Common myeloid progenitor, CD34-positive (primary cell): ENCODE measurements at regions of chr1 and their contacts with region 1.

Region 1: DNA sequence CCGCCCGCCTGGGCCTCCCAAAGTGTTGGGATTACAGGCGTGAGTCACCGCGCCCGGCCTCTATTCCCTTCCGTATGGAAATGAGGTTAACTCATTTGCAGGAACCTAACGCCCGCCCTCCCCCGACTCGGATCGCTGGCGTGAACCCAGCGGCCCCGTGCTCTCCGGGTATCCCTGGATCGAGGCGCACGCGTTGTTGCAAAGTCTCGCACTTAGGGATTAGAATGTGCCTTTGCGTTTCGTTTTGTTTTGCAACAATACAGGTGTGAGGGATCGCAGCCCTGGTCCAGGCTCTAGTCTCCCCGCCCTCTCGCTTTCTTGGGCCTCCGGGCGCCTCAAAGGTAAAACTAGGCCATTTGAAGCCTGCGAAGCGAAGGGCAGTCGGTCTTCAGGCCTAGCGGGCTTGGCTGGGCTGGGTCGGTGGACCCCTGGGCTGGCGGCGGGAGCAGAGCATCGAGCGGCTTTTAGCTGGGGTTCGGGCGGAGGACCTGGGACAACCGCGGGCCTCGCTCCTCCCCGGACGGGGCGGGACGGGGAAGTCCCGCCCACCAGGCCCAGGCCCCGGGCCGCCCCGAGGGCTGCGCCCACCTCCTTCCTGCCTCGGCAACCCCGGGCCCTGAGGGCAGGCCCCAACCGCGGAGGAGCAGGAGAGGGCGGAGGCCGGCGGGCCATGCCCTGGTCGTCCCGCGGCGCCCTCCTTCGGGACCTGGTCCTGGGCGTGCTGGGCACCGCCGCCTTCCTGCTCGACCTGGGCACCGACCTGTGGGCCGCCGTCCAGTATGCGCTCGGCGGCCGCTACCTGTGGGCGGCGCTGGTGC is at the start of gene XKR8:
- DNase-seq: peak; percentile 82 to 91 (median 91)
- H3K4me3 ChIP-seq: peak within 1 kb of the TSS; percentile 49 to 93 (median 82)
- H3K27ac ChIP-seq: peak within 1 kb of the TSS; percentile 46 to 83
- H3K4me1 ChIP-seq: peaks cover 2 to 33% (median 23%) of the 10 kb centered on the region in 4 experiments
- H3K27me3 ChIP-seq: no peaks in the 10 kb centered on the region

Region 2: DNA sequence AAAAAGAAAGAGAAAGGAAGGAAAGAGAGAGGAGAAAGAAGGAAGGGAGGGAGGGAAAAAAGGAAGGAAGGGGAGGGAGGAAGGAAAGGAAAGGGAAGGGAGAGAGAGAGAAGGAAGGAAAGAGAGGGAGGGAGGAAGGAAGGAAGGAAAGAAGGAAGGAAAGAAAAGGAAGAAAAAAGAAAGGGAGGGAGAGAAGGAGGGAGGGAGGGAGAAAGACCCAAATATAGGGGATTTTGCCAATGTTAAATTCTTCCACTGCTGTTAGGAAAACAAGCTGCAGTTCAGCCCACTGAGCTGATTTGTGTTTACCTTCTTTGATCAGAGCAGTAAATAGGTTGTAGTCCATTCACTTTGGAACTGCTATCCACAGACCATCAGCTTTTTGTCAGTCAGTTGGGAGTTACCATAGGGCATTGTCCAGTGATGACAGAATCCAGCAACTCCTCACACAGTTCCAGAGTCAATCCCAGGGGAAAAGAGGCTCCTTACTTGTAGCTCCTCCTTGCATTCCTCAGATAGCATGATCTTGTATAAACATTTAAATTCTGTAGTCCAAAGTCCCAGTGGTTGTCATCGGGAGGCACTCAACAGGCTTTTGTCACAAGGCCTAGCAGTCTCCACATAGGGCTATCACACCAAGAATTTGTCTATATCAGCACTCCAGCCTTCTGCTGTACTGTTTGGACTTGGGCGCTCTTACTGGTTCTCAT is 142.5 kb before region 1 on chr1:
- CTCF ChIA-PET with region 1: no interaction called
- POLR2A ChIA-PET with region 1: no interaction called
- DNase-seq: no peak
- H3K4me3 ChIP-seq: no peak overlapping the region
- H3K27ac ChIP-seq: no peak overlapping the region
- H3K4me1 ChIP-seq: no peaks in the 10 kb centered on the region
- H3K27me3 ChIP-seq: no peaks in the 10 kb centered on the region

Region 3: GRCh38 chr1:27970401-27970800 is 10.8 kb after region 1 on chr1:
- CTCF ChIA-PET with region 1: interaction called, 40 read pairs
- POLR2A ChIA-PET with region 1: no interaction called
- DNase-seq: no peak
- H3K4me3 ChIP-seq: no peak overlapping the region
- H3K27ac ChIP-seq: no peak overlapping the region
- H3K4me1 ChIP-seq: peaks cover 0 to 1% (median 0%) of the 10 kb centered on the region in 4 experiments
- H3K27me3 ChIP-seq: no peaks in the 10 kb centered on the region

Region 4: DNA sequence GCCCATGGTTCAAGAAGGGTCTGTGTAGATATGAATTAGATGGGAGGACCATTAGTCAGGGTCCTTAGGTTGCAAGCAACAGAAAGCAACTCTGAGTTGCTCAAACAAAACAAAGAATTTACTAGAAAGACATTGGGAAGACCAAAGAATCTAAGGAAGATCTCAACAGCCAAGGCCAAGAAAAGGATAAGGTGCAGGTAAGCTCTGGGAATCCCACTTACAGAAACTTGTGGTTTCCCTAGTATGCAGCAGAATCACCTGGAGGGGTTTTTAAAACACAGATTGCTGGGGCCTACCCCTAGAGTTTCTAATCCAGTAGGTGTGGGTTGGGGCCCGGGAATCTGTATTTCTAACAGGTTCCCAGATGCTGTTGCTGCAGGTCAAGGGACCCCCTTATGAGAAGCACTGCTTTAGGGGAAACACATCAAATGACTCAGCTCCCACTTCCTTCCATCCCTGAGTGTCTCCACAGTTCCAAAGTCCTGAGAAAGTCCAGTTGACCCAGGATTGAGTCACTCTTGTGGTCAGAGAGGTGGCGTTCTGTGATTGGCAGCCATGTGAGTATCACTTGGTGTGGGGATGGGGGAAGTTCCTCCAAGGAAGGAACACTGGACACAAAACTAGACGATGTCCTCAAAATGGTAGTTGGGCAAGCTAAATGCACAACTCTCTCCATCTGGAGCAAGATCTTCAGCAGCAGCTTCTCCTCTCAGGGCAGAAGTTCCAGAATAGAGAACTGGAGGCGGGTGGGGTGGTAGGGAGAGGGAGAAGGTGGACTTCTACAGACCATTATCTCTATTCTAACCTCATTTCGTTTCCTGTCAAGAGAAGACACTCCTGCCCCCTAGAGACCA is 153.0 kb after region 1 on chr1:
- CTCF ChIA-PET with region 1: no interaction called
- POLR2A ChIA-PET with region 1: no interaction called
- DNase-seq: peak in 2 of 3 donors; percentile 29 to 43
- H3K4me3 ChIP-seq: no peak overlapping the region
- H3K27ac ChIP-seq: no peak overlapping the region
- H3K4me1 ChIP-seq: peaks cover 4 to 54% (median 27%) of the 10 kb centered on the region in 4 experiments
- H3K27me3 ChIP-seq: no peaks in the 10 kb centered on the region